Activated CD8-positive, alpha-beta T cell treated with anti-CD3 and anti-CD28 coated beads for 36 hours (primary cell): ENCODE measurements at regions of chr18 and their contacts with region 1.

Region 1: GRCh38 chr18:76982841-76983587 is 149.6 kb downstream of the MBP start:
- DNase-seq: peak; percentile 95
- ATAC-seq: peak; percentile 100
- H3K4me3 Mint-ChIP-seq: no peak overlapping the region
- H3K27ac Mint-ChIP-seq: no peak overlapping the region
- H3K4me1 Mint-ChIP-seq: peaks cover 6% of the 10 kb centered on the region
- H3K27me3 Mint-ChIP-seq: no peaks in the 10 kb centered on the region
- CTCF ChIP-seq: peak; percentile 87

Region 2: DNA sequence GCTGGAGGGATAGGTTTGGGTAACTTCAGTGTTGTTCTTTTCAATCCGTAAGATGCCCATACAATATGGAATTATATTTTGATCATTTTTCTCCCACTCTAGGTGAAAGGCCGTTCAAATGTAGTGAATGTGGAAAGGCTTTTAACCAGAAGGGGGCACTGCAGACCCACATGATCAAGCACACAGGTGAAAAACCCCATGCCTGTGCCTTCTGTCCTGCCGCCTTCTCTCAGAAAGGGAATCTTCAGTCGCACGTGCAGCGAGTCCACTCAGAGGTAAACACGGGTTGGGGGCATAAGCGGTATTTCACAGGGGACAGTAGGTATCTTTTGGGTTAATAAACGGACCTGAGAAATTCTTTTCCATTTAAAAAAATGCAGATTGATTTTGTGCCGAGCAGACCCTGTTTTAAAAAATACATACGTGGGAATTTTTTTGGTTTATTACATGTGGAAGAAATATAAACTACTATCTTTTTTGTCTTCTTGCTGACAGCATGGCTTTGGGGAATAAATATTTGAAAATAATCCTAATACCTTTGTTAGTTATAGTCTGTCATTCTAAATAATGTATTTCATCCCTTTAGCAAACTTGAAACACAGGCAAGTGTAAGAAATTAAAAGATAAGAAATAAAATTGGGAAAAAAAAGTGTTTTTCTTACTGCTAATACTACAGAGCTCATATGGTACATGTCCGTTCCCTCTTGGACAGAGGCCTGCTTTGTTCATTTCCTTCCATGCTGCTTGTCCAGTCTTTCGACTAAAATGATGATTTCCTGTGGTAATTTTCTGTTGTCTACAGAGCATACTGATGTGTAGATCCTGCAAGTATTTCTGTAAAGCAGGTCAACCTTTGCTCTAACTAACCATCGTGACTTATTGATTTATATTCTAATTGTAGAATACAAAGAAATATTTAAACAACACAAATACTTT is 107.4 kb before region 1 on chr18:
- CTCF ChIA-PET with region 1: interaction called, 6 read pairs
- POLR2A ChIA-PET with region 1: no interaction called
- intact Hi-C with region 1: loop called (anchors 5 kb)
- DNase-seq: peak; percentile 67
- ATAC-seq: peak; percentile 69
- H3K4me3 Mint-ChIP-seq: no peak overlapping the region
- H3K27ac Mint-ChIP-seq: peak overlapping the region; percentile 68
- H3K4me1 Mint-ChIP-seq: peaks cover 13% of the 10 kb centered on the region
- H3K27me3 Mint-ChIP-seq: no peaks in the 10 kb centered on the region
- CTCF ChIP-seq: peak; percentile 75

Region 3: GRCh38 chr18:76922107-76922506 is 60.9 kb before region 1 on chr18:
- CTCF ChIA-PET with region 1: interaction called, 22 read pairs
- POLR2A ChIA-PET with region 1: no interaction called
- intact Hi-C with region 1: no loop called
- DNase-seq: peak; percentile 65
- ATAC-seq: peak; percentile 98
- H3K4me3 Mint-ChIP-seq: no peak overlapping the region
- H3K27ac Mint-ChIP-seq: no peak overlapping the region
- H3K4me1 Mint-ChIP-seq: peaks cover 13% of the 10 kb centered on the region
- H3K27me3 Mint-ChIP-seq: no peaks in the 10 kb centered on the region
- CTCF ChIP-seq: peak; percentile 49

Region 4: GRCh38 chr18:76970770-76971559 is 12.0 kb before region 1 on chr18:
- CTCF ChIA-PET with region 1: interaction called, 37 read pairs
- POLR2A ChIA-PET with region 1: no interaction called
- intact Hi-C with region 1: no loop called
- DNase-seq: no peak
- ATAC-seq: no peak
- H3K4me3 Mint-ChIP-seq: no peak overlapping the region
- H3K27ac Mint-ChIP-seq: no peak overlapping the region
- H3K4me1 Mint-ChIP-seq: peaks cover 11% of the 10 kb centered on the region
- H3K27me3 Mint-ChIP-seq: no peaks in the 10 kb centered on the region
- CTCF ChIP-seq: no peak

Region 5: DNA sequence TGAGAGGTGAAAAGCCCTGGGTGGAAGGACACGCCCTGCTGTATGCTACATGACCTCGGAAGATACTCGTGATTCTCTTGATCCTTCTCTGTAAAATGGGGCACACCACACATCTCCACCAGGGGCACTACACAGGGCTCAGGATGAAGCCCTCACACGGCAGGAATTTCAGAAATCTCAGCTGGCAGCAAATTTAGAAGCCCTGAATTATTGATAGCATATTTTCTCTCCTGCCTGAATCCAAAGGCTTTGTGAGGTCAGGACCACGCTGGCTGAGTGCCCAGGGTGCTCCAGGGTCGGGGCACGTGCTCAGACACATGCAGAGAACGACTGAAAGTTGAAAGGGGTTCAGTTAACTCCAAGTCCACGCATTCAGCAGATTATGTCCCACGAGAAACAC is 224.5 kb after region 1 on chr18:
- CTCF ChIA-PET with region 1: interaction called, 28 read pairs
- POLR2A ChIA-PET with region 1: no interaction called
- intact Hi-C with region 1: no loop called
- DNase-seq: peak; percentile 69
- ATAC-seq: peak; percentile 78
- H3K4me3 Mint-ChIP-seq: no peak overlapping the region
- H3K27ac Mint-ChIP-seq: peak overlapping the region; percentile 36
- H3K4me1 Mint-ChIP-seq: peaks cover 40% of the 10 kb centered on the region
- H3K27me3 Mint-ChIP-seq: no peaks in the 10 kb centered on the region
- CTCF ChIP-seq: peak; percentile 68